ENCODE measurements at regions of chr2 and their contacts with region 1.

Region 1: GRCh38 chr2:207083361-207084110 is 82.2 kb downstream of the KLF7 start:
- DNase-seq: no peak
- H3K4me3 ChIP-seq: no peak overlapping the region
- H3K27ac ChIP-seq: peak overlapping the region in 3 of 4 donors; percentile 3 to 60 (median 56)
- H3K4me1 ChIP-seq: peaks cover 0 to 31% (median 21%) of the 10 kb centered on the region in 4 donors
- H3K27me3 ChIP-seq: no peaks in the 10 kb centered on the region
- CTCF ChIP-seq: no peak
- EP300 ChIP-seq: no peak
- POLR2A ChIP-seq: no peak

Region 2: GRCh38 chr2:207223051-207223450 is 139.5 kb after region 1 on chr2:
- intact Hi-C with region 1: loop called (anchors 10 kb)
- DNase-seq: no peak
- H3K4me3 ChIP-seq: no peak overlapping the region
- H3K27ac ChIP-seq: no peak overlapping the region
- H3K4me1 ChIP-seq: peaks cover 0 to 43% (median 21%) of the 10 kb centered on the region in 4 donors
- H3K27me3 ChIP-seq: no peaks in the 10 kb centered on the region
- CTCF ChIP-seq: no peak
- EP300 ChIP-seq: no peak
- POLR2A ChIP-seq: no peak